ENCODE measurements at regions of chr7 and their contacts with region 1.

Region 1: DNA sequence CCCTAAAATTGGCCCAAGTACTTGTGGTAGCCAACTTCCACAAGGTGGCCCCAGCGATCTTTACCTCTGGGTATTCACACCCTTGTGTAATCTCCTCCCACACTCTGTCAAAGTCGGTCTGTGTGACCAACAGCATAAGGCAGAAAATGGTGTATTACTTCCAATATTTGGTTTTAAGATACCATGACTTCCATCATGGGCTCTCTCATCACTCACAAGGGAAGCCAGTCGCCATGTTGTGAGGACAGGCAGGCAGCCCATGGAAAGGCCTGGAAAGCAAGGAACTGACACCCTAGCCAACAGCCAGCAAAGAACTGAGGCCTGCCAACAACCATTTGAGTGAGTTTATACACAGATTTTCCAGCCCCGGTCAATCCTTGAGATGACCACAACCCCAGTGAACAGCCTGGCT is 91.0 kb upstream of the KMT2E start:
- DNase-seq: peak; percentile 40 to 69 (median 62)
- ATAC-seq: peak; percentile 94
- H3K4me3 ChIP-seq: no peak overlapping the region
- H3K4me3 Mint-ChIP-seq: no peak overlapping the region
- H3K27ac ChIP-seq: no peak overlapping the region
- H3K27ac Mint-ChIP-seq: peak overlapping the region in 5 of 9 donors; percentile 46 to 68 (median 55)
- H3K4me1 ChIP-seq: no peaks in the 10 kb centered on the region
- H3K4me1 Mint-ChIP-seq: peaks cover 0 to 7% (median 2%) of the 10 kb centered on the region in 7 donors
- H3K27me3 ChIP-seq: no peaks in the 10 kb centered on the region
- H3K27me3 Mint-ChIP-seq: peaks cover 0 to 6% (median 0%) of the 10 kb centered on the region in 5 donors

Region 2: DNA sequence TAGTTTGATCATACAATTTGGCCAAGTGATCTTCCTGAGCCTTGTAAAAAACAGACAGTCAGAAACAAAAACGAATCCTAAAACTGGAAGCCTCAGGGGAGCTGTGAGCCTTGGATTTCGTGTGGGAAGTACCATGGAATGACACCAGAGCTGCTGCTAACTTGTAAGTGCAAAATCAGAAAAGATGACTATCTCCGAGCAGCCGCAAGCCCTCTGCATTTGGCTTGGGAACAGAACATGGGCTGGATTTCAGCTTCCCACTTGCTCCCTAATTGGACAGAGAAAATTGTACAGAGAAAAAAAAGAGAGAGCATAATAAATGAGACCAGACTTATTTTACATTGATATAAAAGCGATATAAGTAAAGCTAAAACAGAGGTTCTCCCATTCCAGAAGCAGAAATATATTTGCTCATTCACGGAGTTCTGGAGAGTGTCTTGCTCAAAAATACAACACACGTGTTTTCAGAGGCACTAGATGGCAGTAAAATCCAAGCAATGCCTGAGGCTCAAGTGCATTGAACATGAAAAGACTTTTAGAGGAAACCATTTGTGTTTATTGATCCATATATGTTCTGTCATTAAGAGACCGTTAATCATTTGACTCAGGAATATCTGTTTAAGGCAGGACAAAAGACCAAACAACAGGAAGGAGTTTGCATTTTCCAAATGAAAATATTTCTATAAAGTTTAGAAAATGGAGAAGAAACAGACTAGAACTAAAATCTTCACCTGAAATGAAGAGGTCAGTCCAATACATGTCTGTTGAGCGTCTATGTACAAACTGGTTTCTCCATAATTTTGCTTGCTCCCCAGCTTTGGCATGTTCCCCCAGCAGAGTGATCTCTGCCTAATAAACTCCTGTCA is 1398.7 kb before region 1 on chr7:
- CTCF ChIA-PET with region 1: no interaction called
- POLR2A ChIA-PET with region 1: no interaction called
- intact Hi-C with region 1: loop called in 1 of 2 experiments (anchors 1 kb)
- DNase-seq: no peak
- ATAC-seq: no peak
- H3K4me3 ChIP-seq: no peak overlapping the region
- H3K4me3 Mint-ChIP-seq: no peak overlapping the region
- H3K27ac ChIP-seq: no peak overlapping the region
- H3K27ac Mint-ChIP-seq: no peak overlapping the region
- H3K4me1 ChIP-seq: no peaks in the 10 kb centered on the region
- H3K4me1 Mint-ChIP-seq: no peaks in the 10 kb centered on the region
- H3K27me3 ChIP-seq: peaks cover 0 to 3% of the 10 kb centered on the region in 2 donors
- H3K27me3 Mint-ChIP-seq: peaks cover 2 to 19% (median 17%) of the 10 kb centered on the region in 5 donors

Region 3: GRCh38 chr7:104272767-104273384 is 650.1 kb before region 1 on chr7:
- CTCF ChIA-PET with region 1: no interaction called
- POLR2A ChIA-PET with region 1: no interaction called
- intact Hi-C with region 1: loop called in 1 of 2 experiments (anchors 2 kb)
- DNase-seq: no peak
- ATAC-seq: no peak
- H3K4me3 ChIP-seq: no peak overlapping the region
- H3K4me3 Mint-ChIP-seq: no peak overlapping the region
- H3K27ac ChIP-seq: no peak overlapping the region
- H3K27ac Mint-ChIP-seq: no peak overlapping the region
- H3K4me1 ChIP-seq: no peaks in the 10 kb centered on the region
- H3K4me1 Mint-ChIP-seq: peaks cover 0 to 2% (median 0%) of the 10 kb centered on the region in 7 donors
- H3K27me3 ChIP-seq: no peaks in the 10 kb centered on the region
- H3K27me3 Mint-ChIP-seq: peaks cover 6 to 52% (median 40%) of the 10 kb centered on the region in 5 donors

Region 4: GRCh38 chr7:104943502-104944343 is 20.7 kb after region 1 on chr7:
- CTCF ChIA-PET with region 1: interaction called, 5 read pairs
- POLR2A ChIA-PET with region 1: interaction called, 3 read pairs
- intact Hi-C with region 1: loop called (anchors 1 kb)
- DNase-seq: peak; percentile 31 to 85 (median 68)
- ATAC-seq: peak; percentile 23
- H3K4me3 ChIP-seq: peak overlapping the region; percentile 40
- H3K4me3 Mint-ChIP-seq: peak overlapping the region; percentile 77 to 95 (median 88)
- H3K27ac ChIP-seq: peak overlapping the region; percentile 87
- H3K27ac Mint-ChIP-seq: peak overlapping the region; percentile 95 to 100 (median 100)
- H3K4me1 ChIP-seq: peaks cover 46 to 50% of the 10 kb centered on the region in 2 donors
- H3K4me1 Mint-ChIP-seq: peaks cover 45 to 79% (median 70%) of the 10 kb centered on the region in 7 donors
- H3K27me3 ChIP-seq: no peaks in the 10 kb centered on the region
- H3K27me3 Mint-ChIP-seq: peaks cover 0 to 2% (median 0%) of the 10 kb centered on the region in 5 donors

Region 5: GRCh38 chr7:105336009-105336408 is 413.0 kb after region 1 on chr7:
- CTCF ChIA-PET with region 1: no interaction called
- POLR2A ChIA-PET with region 1: no interaction called
- intact Hi-C with region 1: loop called (anchors 1 to 2 kb)
- DNase-seq: peak in 3 of 9 donors; percentile 17 to 31 (median 17)
- ATAC-seq: no peak
- H3K4me3 ChIP-seq: no peak overlapping the region
- H3K4me3 Mint-ChIP-seq: no peak overlapping the region
- H3K27ac ChIP-seq: no peak overlapping the region
- H3K27ac Mint-ChIP-seq: no peak overlapping the region
- H3K4me1 ChIP-seq: peaks cover 0 to 6% of the 10 kb centered on the region in 2 donors
- H3K4me1 Mint-ChIP-seq: peaks cover 10 to 45% (median 30%) of the 10 kb centered on the region in 7 donors
- H3K27me3 ChIP-seq: no peaks in the 10 kb centered on the region
- H3K27me3 Mint-ChIP-seq: no peaks in the 10 kb centered on the region

Region 6: GRCh38 chr7:105589356-105590077 is 666.5 kb after region 1 on chr7:
- CTCF ChIA-PET with region 1: interaction called, 4 read pairs
- POLR2A ChIA-PET with region 1: no interaction called
- intact Hi-C with region 1: loop called (anchors 1 to 5 kb)
- DNase-seq: peak in 8 of 9 donors; percentile 16 to 61 (median 42)
- ATAC-seq: peak; percentile 87
- H3K4me3 ChIP-seq: no peak overlapping the region
- H3K4me3 Mint-ChIP-seq: no peak overlapping the region
- H3K27ac ChIP-seq: no peak overlapping the region
- H3K27ac Mint-ChIP-seq: peak overlapping the region in 3 of 9 donors; percentile 4 to 70 (median 69)
- H3K4me1 ChIP-seq: no peaks in the 10 kb centered on the region
- H3K4me1 Mint-ChIP-seq: peaks cover 0 to 17% (median 4%) of the 10 kb centered on the region in 7 donors
- H3K27me3 ChIP-seq: no peaks in the 10 kb centered on the region
- H3K27me3 Mint-ChIP-seq: peaks cover 0 to 9% (median 0%) of the 10 kb centered on the region in 5 donors

Measured in naive thymus-derived CD4-positive, alpha-beta T cell (primary cell).